PC-9 (cell line): ENCODE measurements at regions of chr7 and their contacts with region 1.

Region 1: DNA sequence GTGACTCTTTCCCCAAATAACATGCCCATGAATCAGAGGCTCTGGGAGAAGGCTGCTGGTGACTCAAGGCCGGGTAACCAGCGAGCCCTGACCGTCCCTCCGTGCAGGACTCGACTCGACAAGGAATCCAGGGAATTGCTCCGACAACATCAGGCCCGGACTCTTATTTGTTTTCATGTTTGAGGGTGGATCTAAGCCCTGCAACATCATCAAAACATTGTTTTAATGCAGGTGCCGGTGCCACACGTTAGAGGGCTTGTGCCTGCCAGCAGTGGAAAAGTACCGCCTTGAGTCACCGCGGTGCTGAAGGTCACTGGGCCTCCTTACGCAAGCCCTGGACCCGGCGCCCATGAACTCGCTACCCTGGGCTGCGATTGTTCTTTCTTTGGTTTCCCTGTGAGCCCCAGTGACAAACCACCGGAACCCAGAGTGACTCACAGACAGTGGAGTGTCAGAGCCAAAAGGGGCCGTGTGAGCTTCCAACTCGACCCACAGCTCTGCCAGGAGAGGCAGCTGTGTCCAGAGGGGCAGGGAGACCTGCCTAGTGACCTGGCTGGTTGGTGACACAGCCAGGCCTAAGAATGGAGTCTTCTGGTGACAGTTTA is 139.4 kb upstream of the SHH start:
- DNase-seq: peak; percentile 94 to 100
- H3K4me3 ChIP-seq: peak overlapping the region; percentile 45; the same call in 1 of the 2 replicates
- H3K27ac ChIP-seq: peak overlapping the region; percentile 98
- H3K4me1 ChIP-seq: peaks cover 70% of the 10 kb centered on the region
- H3K27me3 ChIP-seq: no peaks in the 10 kb centered on the region
- CTCF ChIP-seq: no peak

Region 2: DNA sequence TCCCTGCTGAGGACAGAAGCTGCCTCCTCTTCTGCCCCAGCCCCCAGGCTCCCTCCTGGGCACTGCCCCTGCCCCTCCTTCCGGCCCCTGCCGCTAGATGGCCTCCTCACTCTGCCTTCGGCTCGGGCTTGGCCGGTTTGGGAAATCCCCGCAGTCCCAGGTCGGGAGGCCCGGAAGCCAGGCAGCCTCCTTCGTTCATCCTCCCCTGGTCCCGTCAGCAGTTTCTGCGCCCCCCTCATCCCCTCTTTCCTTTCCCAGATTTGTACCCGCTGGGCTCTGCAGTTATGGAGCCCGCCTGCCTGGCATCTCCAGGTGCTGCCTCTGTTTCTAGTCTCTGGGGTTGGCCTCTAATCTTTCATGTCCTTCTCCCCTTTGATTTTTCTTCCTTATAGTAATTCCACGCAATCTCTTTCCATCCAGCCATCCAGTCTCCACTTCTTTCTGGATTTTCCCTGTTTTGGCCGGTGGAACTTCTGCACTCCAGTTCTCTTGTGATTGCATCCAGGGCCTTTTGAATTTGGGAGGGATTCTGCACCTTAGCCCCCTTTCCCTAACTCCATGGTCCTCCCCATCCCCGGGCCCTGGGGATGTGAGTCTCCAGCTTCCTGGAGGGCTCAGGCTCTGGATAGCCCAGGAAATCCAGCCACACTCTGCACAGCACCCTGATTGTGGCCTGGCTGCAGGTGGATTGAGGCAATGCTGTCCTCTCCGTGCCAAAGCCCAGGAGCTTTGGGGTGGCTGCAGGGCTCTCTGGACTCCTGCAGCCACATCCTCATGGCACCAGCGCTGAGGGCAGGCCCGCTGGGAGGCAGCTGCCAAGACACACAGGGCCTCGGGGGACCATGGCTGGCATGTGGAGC is 136.1 kb before region 1 on chr7:
- CTCF ChIA-PET with region 1: no interaction called
- POLR2A ChIA-PET with region 1: no interaction called
- intact Hi-C with region 1: loop called (anchors 2 kb)
- DNase-seq: peak; percentile 49 to 80
- H3K4me3 ChIP-seq: peak overlapping the region; percentile 11; the same call in 1 of the 2 replicates
- H3K27ac ChIP-seq: no peak overlapping the region
- H3K4me1 ChIP-seq: peaks cover 39% of the 10 kb centered on the region
- H3K27me3 ChIP-seq: no peaks in the 10 kb centered on the region
- CTCF ChIP-seq: peak; percentile 90

Region 3: DNA sequence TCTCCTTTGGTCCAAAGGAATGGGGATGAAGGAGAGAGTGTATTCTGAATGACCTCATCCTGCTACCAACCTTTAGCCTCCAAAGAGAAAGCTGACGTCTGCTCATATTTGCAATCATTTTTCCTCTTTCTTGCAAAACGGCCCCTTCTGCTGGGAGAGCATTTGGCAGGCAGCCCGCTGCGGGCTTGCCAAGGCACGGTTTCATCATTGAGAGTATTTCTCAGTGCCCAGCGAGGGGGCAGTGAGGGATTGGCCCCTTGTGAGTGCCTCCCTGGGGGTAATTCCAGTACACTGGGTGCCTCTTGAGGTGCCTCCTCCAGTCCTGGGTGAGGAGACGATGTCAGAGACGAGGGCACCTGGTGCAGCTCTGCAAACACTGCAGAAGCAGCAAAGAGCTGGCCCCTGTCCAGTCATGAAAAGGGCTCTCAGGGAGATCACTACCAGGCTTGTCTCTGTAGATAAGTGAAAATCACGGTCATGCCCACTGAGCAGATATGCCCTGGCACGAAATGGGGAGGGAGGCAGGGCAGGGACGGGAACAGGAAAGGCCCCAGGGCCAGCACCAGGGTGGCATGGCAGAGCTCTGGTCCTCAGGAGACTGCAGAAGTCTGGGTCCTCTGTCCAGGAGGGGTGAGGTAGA is 90.7 kb before region 1 on chr7:
- CTCF ChIA-PET with region 1: no interaction called
- POLR2A ChIA-PET with region 1: no interaction called
- intact Hi-C with region 1: loop called (anchors 1 kb)
- DNase-seq: peak; percentile 61 to 92
- H3K4me3 ChIP-seq: peak overlapping the region; percentile 4; the same call in 1 of the 2 replicates
- H3K27ac ChIP-seq: peak overlapping the region; percentile 65
- H3K4me1 ChIP-seq: peaks cover 48% of the 10 kb centered on the region
- H3K27me3 ChIP-seq: 0 out of 2 replicates have a peak, but pooled peaks cover 7% of the 10 kb centered on the region
- CTCF ChIP-seq: no peak

Region 4: GRCh38 chr7:155918714-155919399 is 32.8 kb before region 1 on chr7:
- CTCF ChIA-PET with region 1: interaction called, 3 read pairs
- POLR2A ChIA-PET with region 1: interaction called, 20 read pairs
- intact Hi-C with region 1: loop called (anchors 1 kb)
- DNase-seq: peak; percentile 86 to 99
- H3K4me3 ChIP-seq: no peak overlapping the region
- H3K27ac ChIP-seq: peak overlapping the region; percentile 67
- H3K4me1 ChIP-seq: peaks cover 56% of the 10 kb centered on the region
- H3K27me3 ChIP-seq: no peaks in the 10 kb centered on the region
- CTCF ChIP-seq: no peak

Region 5: DNA sequence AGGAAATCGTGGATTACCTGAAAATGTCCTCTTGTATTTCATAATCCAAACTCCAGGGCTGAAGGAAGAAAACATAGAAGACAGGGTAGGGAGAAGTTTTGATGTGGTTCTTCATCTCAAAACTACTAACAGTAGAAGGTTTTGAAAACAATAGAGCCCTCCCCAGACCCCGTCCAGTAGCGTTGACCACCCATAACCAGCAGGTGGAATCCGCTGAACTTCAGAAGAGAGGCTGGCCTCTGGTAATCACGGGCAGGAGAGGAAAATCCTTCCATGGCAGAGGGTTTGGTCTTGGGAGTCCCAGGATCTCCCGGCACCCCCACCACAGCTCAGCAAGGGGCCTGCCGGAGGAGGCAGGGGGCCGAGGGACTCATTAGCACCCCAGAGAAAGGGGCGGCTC is 355.5 kb after region 1 on chr7:
- CTCF ChIA-PET with region 1: no interaction called
- POLR2A ChIA-PET with region 1: no interaction called
- intact Hi-C with region 1: no loop called
- DNase-seq: no peak
- H3K4me3 ChIP-seq: no peak overlapping the region
- H3K27ac ChIP-seq: no peak overlapping the region
- H3K4me1 ChIP-seq: no peaks in the 10 kb centered on the region
- H3K27me3 ChIP-seq: peaks cover 97% of the 10 kb centered on the region
- CTCF ChIP-seq: no peak

Region 6: DNA sequence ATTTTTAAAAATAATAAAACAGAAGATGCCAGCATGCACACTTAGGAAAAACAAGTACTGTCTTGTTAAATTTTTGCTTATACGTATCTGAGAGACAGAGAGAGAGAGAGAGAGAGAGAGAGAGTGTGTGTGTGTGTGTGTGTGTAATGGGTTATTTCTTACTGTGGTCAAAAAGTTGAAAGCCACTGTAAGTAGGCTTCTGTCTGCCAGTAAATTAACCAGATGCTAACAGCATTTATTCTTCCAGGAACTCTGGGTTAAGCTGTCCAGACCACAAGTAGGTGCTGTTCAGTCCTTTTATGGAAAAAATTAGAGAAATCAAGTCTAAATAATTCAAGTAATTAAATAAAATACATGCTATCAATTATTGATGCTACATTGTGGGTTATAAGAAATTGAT is 728.6 kb after region 1 on chr7:
- CTCF ChIA-PET with region 1: no interaction called
- POLR2A ChIA-PET with region 1: no interaction called
- intact Hi-C with region 1: no loop called
- DNase-seq: no peak
- H3K4me3 ChIP-seq: no peak overlapping the region
- H3K27ac ChIP-seq: no peak overlapping the region
- H3K4me1 ChIP-seq: no peaks in the 10 kb centered on the region
- H3K27me3 ChIP-seq: no peaks in the 10 kb centered on the region
- CTCF ChIP-seq: no peak

Region 7: DNA sequence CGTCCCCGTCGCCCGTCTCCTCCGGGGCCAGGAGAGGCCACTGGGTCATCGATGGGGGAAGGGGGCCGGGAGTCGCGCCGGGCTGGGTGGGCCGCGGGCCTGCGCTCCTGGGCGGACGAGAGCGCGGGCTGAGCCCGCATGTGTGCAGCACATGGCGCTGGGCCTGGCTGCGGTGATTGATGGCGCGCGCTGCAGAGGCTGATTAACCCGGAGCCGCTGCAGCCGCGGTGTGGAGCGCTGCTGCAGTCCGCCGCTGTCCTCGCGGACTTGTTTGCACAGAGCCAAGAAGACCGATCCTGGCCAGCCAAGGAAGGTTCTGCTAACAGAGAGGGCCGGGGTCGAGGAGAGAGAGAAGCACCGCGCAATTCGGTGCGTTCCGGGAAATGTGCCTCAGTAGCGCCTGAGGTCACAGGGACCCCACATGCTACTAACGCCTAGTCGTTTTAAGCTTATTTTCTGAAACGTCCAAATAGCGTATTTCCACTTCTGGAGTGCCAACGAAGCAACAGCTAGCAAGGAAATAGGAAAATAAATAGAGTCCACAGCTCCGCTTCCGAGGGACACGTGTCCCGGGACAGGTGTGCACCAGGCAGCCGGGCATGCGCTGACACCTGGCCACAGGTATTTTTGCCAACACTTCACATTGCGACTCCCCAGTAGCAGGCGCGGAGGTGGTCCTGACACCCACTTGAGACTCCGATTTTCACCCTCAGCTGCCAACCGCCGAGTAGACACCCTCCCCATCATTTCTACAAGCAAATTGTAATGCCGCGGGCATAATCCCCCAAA is 1052.6 kb after region 1 on chr7:
- CTCF ChIA-PET with region 1: no interaction called
- POLR2A ChIA-PET with region 1: no interaction called
- intact Hi-C with region 1: no loop called
- DNase-seq: no peak
- H3K4me3 ChIP-seq: no peak overlapping the region
- H3K27ac ChIP-seq: no peak overlapping the region
- H3K4me1 ChIP-seq: peaks cover 11% of the 10 kb centered on the region
- H3K27me3 ChIP-seq: no peaks in the 10 kb centered on the region
- CTCF ChIP-seq: no peak